ENCODE measurements at regions of chr7 and their contacts with region 1.

Region 1: GRCh38 chr7:124101173-124101768 is 68.4 kb upstream of the TMEM229A start:
- H3K4me3 ChIP-seq: no peak overlapping the region
- H3K27ac ChIP-seq: no peak overlapping the region
- H3K4me1 ChIP-seq: no peaks in the 10 kb centered on the region
- CTCF ChIP-seq: no peak

Region 2: GRCh38 chr7:124113045-124113444 is 11.8 kb after region 1 on chr7:
- CTCF ChIA-PET with region 1: interaction called, 19 read pairs
- POLR2A ChIA-PET with region 1: no interaction called
- H3K4me3 ChIP-seq: no peak overlapping the region
- H3K27ac ChIP-seq: no peak overlapping the region
- H3K4me1 ChIP-seq: no peaks in the 10 kb centered on the region
- CTCF ChIP-seq: no peak